Activated CD8-positive, alpha-beta T cell treated with anti-CD3 and anti-CD28 coated beads, Interleukin-2, amount 10 ng/mL, durations not matched to agents 7 days and 5 days (primary cell): ENCODE measurements at regions of chr3 and their contacts with region 1.

Region 1: GRCh38 chr3:160449636-160450598 is at the start of gene TRIM59:
- DNase-seq: peak; percentile 99
- ATAC-seq: peak; percentile 95
- H3K4me3 Mint-ChIP-seq: peak within 1 kb of the TSS; percentile 89
- H3K27ac Mint-ChIP-seq: peak within 1 kb of the TSS; percentile 98
- H3K4me1 Mint-ChIP-seq: peaks cover 33% of the 10 kb centered on the region
- H3K27me3 Mint-ChIP-seq: no peaks in the 10 kb centered on the region
- total RNA-seq, gene TRIM59: 51.2 to 53.5 TPM

Region 2: DNA sequence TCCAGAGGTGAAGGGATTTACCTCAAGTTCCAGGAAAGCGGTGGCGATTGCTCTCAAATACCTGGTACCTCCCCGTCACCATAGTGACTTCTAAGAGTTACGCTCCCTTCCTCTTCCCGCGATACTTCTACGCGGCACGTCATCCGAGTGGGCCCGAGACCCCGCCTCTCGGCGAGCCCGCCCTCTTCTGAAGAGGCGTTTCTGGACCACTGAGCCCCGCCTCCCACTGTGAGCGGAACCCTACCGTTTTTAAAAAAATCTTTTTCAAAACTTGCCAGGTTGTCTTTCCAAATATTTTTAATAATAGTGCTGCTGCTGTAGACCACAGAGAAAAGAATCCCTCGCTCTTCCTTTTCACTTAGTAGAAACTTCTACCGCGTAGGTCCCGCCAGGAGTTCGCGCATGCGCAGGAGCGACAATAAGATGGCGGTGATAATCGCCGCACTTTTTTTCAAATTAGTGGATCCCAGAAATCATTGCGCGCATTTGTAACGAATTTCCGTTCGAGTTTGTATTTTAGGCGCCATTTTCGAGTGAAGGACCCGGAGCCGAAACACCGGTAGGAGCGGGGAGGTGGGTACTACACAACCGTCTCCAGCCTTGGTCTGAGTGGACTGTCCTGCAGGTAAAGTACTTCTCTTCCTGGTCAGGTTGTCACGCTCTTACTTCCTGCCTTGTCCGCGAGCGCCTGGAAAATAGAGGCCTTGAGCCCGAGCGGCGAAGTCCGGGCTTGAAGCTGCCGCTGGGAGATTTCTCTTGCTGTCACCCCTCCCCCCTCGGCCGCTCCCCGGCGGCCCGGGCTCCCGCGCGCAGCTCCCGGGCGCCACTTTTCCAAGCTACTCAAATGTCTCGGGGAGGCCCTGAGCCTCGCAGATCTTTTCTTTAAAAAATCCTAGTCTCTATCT is 50.5 kb before region 1 on chr3 and contains the starts of genes IFT80 and SMC4:
- CTCF ChIA-PET with region 1: interaction called, 3 read pairs
- POLR2A ChIA-PET with region 1: interaction called, 76 read pairs
- DNase-seq: peak; percentile 97
- ATAC-seq: peak; percentile 90
- H3K4me3 Mint-ChIP-seq: peak within 1 kb of the TSS; percentile 94
- H3K27ac Mint-ChIP-seq: peak within 1 kb of the TSS; percentile 97
- H3K4me1 Mint-ChIP-seq: peaks cover 44% of the 10 kb centered on the region
- H3K27me3 Mint-ChIP-seq: no peaks in the 10 kb centered on the region
- total RNA-seq, gene IFT80: 27.5 to 29.7 TPM
- total RNA-seq, gene SMC4: 292 to 300 TPM

Region 3: DNA sequence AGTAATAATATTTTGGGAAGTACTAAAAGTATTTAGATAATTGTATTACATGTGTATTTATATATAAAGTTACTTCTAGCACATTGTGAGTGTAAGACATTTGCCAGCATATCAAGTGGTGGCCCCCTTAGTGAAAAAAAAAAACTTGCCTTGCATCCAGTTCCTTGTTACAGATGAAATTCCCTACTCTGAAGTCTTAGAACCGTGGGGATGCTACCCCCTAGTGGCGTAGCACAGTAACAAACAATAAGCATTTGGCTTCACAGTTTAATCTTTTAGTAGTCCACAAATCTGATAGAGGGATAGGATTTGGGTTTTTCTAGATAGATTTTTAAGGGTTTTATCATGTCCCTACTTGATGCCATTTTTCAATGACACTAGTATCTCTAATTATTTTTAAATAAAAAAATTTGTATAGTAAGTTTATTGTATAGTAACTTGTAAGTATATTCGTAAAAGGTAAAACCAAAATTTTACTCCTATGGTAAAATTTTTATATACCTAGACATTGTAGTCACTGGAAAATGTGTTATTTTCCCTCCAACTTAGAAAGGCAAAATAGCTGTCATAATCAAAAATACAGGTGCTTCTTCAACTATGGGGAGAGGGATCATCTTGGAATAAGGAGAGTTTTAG is 36.2 kb before region 1 on chr3:
- CTCF ChIA-PET with region 1: interaction called, 5 read pairs
- POLR2A ChIA-PET with region 1: interaction called, 22 read pairs
- DNase-seq: peak; percentile 70
- ATAC-seq: peak; percentile 70
- H3K4me3 Mint-ChIP-seq: no peak overlapping the region
- H3K27ac Mint-ChIP-seq: no peak overlapping the region
- H3K4me1 Mint-ChIP-seq: peaks cover 47% of the 10 kb centered on the region
- H3K27me3 Mint-ChIP-seq: no peaks in the 10 kb centered on the region

Region 4: DNA sequence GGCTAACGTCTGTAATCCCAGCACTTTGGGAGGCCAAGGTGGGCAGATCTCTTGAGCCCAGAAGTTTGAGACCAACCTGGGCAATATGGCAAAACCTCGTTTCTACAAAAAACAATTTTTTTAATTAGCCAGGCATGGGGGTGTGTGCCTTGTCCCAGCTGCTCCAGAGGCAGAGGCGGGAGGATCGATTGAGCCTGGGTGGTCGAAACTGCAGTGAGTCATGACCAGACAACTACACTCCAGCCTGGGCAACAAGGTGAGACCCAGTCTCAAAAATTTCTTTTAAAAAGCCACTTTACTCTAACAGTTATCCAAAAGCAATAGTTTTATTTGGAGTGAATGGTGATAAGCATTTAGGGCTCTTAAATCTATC is 12.8 kb before region 1 on chr3:
- CTCF ChIA-PET with region 1: interaction called, 9 read pairs
- POLR2A ChIA-PET with region 1: interaction called, 31 read pairs
- DNase-seq: no peak
- ATAC-seq: peak; percentile 48
- H3K4me3 Mint-ChIP-seq: no peak overlapping the region
- H3K27ac Mint-ChIP-seq: no peak overlapping the region
- H3K4me1 Mint-ChIP-seq: peaks cover 50% of the 10 kb centered on the region
- H3K27me3 Mint-ChIP-seq: no peaks in the 10 kb centered on the region

Region 5: DNA sequence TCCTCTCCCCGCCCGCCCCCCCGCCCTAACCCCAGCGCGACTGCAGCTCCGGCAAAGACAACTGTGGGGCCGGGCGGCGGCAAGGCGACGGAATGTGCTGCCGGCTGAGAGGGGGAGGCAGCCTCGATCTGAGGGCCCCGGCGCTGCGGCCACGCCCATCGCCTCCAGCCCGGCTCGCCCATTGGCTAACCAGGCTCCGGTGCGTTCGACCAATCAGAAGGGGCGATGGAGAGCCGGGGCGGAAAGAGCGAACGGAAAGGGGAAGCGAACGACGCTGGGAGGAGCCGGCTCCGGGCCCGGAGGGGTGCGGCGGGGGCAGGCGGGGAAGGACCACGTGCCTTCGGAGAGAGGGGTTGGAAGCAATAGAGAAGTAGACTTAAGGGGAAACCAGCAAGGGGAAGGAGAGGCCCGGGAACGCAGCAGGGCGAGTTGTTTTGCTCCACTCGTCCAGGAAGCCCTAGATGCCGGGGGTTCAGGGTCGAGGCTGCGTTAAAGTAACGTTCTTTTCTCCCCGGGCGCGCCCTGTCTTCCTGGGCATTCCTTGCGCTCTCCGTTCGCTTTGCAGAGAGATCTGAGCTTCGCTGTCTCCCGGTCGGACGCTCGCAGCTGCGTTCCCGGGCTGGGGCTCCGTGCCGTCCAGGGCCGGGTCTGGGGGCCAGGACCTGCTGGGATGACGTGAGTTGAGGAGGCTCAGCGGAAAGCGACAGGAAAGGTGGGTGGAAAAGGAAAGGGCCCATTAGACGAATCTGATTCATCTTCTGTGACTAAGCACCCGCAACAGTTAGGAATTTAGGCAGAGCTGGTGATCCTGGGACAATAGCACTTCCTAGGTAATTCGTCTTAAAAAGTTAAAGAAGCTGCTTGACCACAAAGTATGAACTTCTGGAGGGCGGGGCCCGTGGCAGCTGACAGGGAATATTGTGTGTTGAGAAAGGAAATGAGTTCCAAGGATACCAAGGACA is 115.8 kb after region 1 on chr3 and contains the start of gene KPNA4:
- CTCF ChIA-PET with region 1: interaction called, 3 read pairs
- POLR2A ChIA-PET with region 1: interaction called, 26 read pairs
- DNase-seq: peak; percentile 97
- ATAC-seq: peak; percentile 93
- H3K4me3 Mint-ChIP-seq: peak within 1 kb of the TSS; percentile 97
- H3K27ac Mint-ChIP-seq: peak within 1 kb of the TSS; percentile 98
- H3K4me1 Mint-ChIP-seq: peaks cover 67% of the 10 kb centered on the region
- H3K27me3 Mint-ChIP-seq: no peaks in the 10 kb centered on the region
- total RNA-seq, gene KPNA4: 36.7 to 46.3 TPM

Region 6: GRCh38 chr3:160709477-160710182 is 259.7 kb after region 1 on chr3:
- CTCF ChIA-PET with region 1: no interaction called
- POLR2A ChIA-PET with region 1: no interaction called
- DNase-seq: no peak
- ATAC-seq: no peak
- H3K4me3 Mint-ChIP-seq: no peak overlapping the region
- H3K27ac Mint-ChIP-seq: no peak overlapping the region
- H3K4me1 Mint-ChIP-seq: no peaks in the 10 kb centered on the region
- H3K27me3 Mint-ChIP-seq: peaks cover 20% of the 10 kb centered on the region